Activated CD8-positive, alpha-beta T cell treated with anti-CD3 and anti-CD28 coated beads for 36 hours (primary cell): ENCODE measurements at regions of chr13 and their contacts with region 1.

Region 1: GRCh38 chr13:41019011-41019487 is at the start of gene ELF1:
- DNase-seq: peak; percentile 76
- ATAC-seq: peak; percentile 88
- H3K4me3 Mint-ChIP-seq: peak within 1 kb of the TSS; percentile 91
- H3K27ac Mint-ChIP-seq: peak within 1 kb of the TSS; percentile 98
- H3K4me1 Mint-ChIP-seq: peaks cover 24% of the 10 kb centered on the region
- H3K27me3 Mint-ChIP-seq: no peaks in the 10 kb centered on the region
- CTCF ChIP-seq: no peak
- total RNA-seq, gene ELF1: 85.2 to 88.2 TPM

Region 2: DNA sequence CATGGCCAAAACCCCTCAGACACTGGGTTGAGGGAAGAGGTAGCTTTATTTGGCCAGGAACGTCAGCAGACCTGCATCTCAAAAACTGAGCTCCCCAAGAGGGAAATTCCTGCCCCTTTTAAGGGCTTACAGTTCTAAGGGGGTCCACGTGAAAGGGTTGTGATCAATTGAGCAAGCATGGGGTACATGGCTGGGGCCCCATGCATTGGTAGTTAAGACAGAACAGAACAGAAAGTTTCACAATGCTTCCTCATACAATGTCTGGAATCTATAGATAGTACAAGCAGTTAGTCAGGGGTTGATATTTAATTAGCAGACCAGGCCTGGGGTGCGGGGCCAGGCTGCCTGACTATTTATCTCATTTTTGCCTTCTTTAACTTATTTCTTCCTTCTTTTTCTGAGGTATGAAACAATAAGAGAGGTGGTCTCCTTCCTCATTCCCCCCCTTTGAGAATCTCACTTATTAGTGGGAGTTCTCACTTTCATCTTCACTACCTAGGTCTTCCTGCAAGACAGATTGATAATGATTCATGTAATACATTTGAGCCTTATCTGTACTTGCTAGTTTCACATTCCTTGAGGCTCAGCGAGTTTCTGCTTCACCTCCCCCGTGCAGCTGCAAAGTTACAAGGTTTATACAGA is 144.8 kb before region 1 on chr13:
- CTCF ChIA-PET with region 1: no interaction called
- POLR2A ChIA-PET with region 1: no interaction called
- intact Hi-C with region 1: no loop called
- DNase-seq: no peak
- ATAC-seq: no peak
- H3K4me3 Mint-ChIP-seq: no peak overlapping the region
- H3K27ac Mint-ChIP-seq: no peak overlapping the region
- H3K4me1 Mint-ChIP-seq: no peaks in the 10 kb centered on the region
- H3K27me3 Mint-ChIP-seq: no peaks in the 10 kb centered on the region
- CTCF ChIP-seq: no peak

Region 3: GRCh38 chr13:40895227-40896184 is 123.5 kb before region 1 on chr13:
- CTCF ChIA-PET with region 1: no interaction called
- POLR2A ChIA-PET with region 1: no interaction called
- intact Hi-C with region 1: no loop called
- DNase-seq: no peak
- ATAC-seq: no peak
- H3K4me3 Mint-ChIP-seq: no peak overlapping the region
- H3K27ac Mint-ChIP-seq: no peak overlapping the region
- H3K4me1 Mint-ChIP-seq: peaks cover 5% of the 10 kb centered on the region
- H3K27me3 Mint-ChIP-seq: no peaks in the 10 kb centered on the region
- CTCF ChIP-seq: no peak

Region 4: DNA sequence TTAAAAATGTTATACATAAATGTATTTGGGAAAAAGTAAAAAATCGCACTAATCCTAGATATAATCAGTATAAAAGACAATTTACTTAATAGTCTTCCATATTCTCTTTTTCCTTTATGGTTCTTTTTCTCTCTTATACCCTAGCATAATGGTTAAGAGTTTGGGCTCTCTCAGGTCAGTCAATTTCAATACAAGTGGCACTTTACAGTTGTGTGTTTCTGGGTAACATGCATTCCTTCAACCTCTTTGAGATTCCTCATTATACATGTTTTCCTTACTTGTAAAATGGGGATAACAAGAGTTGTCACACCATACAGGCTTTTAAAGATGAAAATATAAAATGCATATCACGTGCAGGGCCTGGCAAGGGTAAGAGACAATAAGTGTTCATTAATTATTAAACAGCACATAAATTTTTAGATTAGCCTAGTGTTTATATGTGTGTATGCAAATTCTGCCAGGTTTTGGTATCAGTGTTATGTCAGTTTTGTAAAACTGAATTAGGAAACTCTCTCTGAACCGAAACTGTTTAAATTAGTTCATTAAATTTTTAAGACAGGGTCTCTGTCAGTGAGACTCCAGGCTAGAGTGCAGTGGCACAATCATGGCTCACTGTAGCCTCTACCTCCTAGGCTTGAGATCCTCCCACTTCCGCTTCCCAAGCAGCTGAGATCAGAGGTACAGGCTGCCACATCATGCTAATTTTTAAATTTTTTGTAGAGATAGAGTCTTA is 49.7 kb before region 1 on chr13:
- CTCF ChIA-PET with region 1: interaction called, 30 read pairs
- POLR2A ChIA-PET with region 1: interaction called, 9 read pairs
- intact Hi-C with region 1: loop called (anchors 10 kb)
- DNase-seq: peak; percentile 54
- ATAC-seq: peak; percentile 75
- H3K4me3 Mint-ChIP-seq: peak overlapping the region; percentile 37
- H3K27ac Mint-ChIP-seq: peak overlapping the region; percentile 77
- H3K4me1 Mint-ChIP-seq: peaks cover 95% of the 10 kb centered on the region
- H3K27me3 Mint-ChIP-seq: no peaks in the 10 kb centered on the region
- CTCF ChIP-seq: no peak

Region 5: GRCh38 chr13:40982772-40983171 is 36.3 kb before region 1 on chr13:
- CTCF ChIA-PET with region 1: interaction called, 8 read pairs
- POLR2A ChIA-PET with region 1: interaction called, 102 read pairs
- intact Hi-C with region 1: loop called (anchors 2 kb)
- DNase-seq: peak; percentile 76
- ATAC-seq: peak; percentile 73
- H3K4me3 Mint-ChIP-seq: peak overlapping the region; percentile 99
- H3K27ac Mint-ChIP-seq: peak overlapping the region; percentile 92
- H3K4me1 Mint-ChIP-seq: peaks cover 46% of the 10 kb centered on the region
- H3K27me3 Mint-ChIP-seq: no peaks in the 10 kb centered on the region
- CTCF ChIP-seq: no peak

Region 6: GRCh38 chr13:41040606-41041319 is 21.7 kb after region 1 on chr13:
- CTCF ChIA-PET with region 1: no interaction called
- POLR2A ChIA-PET with region 1: no interaction called
- intact Hi-C with region 1: no loop called
- DNase-seq: no peak
- ATAC-seq: no peak
- H3K4me3 Mint-ChIP-seq: no peak overlapping the region
- H3K27ac Mint-ChIP-seq: no peak overlapping the region
- H3K4me1 Mint-ChIP-seq: peaks cover 15% of the 10 kb centered on the region
- H3K27me3 Mint-ChIP-seq: no peaks in the 10 kb centered on the region
- CTCF ChIP-seq: no peak